ENCODE measurements at regions of chr3 and their contacts with region 1.

Region 1: GRCh38 chr3:53938645-53939044 is 47.0 kb upstream of the SELENOK start:
- DNase-seq: peak; percentile 53
- CTCF ChIP-seq: peak; percentile 80

Region 2: DNA sequence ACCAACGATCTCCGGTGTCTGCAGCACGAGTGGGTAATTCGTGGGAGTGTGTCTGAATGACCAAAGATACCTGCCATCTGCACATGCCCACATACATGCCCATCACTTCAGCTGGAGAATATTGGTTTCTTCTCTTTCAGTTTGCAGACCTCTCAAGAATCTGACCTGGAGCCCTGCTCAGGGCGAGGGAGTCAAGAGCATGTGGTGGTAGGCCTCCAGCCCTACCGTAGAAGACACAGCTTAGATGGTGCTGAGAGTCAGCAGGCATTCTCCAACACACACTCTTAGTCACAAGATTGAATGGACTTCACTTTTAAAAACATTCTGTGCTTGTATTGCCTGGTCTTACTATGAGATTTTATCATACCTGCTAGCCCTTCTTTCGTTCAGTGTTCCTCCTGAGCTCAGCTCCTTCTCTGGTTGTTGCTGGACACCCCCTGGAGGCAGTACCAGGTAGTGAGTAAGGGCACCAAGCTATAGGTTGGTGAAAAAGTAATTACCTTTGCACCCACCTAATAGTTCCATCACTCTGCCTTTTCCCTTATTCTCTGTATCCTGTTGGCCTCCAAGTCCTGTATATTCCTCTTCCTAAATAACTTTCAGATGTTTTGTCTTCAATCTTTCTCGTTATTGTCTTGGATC is 435.7 kb after region 1 on chr3:
- in situ Hi-C with region 1: loop called (anchors 25 kb)
- DNase-seq: peak; percentile 10
- CTCF ChIP-seq: peak; percentile 4